ENCODE measurements at regions of chr1 and their contacts with region 1.

Region 1: DNA sequence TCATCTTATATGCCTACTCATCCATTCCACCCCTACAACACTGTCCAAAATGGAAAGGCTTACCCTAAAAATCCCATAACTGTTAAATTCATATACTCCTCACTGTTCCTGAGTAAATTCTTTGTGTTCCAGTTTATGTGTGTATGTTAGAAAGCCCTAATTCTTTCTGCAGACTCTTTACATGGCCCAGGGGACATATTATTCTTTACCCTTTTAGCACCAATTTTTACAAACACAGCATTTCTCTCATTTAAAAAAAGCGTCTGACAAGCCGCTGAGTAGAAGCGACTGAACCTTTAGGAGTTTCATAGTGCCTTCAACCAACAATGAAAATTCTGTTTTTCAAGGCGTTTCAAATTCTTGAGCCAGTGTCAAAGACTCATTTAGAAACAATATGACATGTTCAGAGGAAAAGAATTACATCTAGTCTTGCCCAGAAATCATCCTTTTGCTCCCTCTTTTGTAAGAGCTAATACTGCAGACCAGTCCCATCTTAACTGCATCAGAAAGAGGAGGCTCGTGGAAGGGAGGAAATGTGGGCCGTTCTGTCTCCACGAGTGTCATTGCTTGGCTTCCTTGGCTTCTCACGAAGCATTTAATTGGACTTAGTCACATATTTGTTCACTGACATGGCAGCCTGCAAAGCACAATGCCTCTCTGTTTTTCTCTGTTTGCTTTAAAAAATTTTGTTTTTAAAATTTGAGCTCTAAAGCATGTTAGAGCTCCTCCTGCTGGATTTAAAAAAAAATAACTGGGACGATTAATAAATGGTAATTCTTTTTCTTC is 21.3 kb upstream of the C1orf105 start:
- DNase-seq: peak; percentile 70
- H3K4me3 ChIP-seq: no peak overlapping the region
- H3K27ac ChIP-seq: no peak overlapping the region
- H3K27me3 ChIP-seq: no peaks in the 10 kb centered on the region
- CTCF ChIP-seq: peak; percentile 58

Region 2: DNA sequence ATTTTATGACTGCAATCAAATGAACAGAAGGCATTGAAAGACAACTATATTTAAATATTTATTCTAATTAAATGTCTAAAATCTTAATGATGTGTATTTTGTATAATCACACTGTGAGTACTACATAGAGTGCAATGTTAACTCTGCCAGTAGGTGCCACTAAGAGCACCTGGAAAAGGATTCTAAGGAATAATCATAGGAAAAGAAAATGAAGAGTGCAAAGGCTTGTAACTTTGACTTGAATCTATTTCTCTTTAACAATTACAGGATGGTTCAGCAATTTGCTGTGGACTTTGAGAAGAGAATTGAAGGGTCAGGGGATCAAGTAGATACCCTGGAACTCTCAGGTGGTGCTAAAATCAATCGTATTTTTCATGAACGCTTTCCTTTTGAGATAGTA is 357.4 kb before region 1 on chr1:
- CTCF ChIA-PET with region 1: interaction called, 11 read pairs
- POLR2A ChIA-PET with region 1: interaction called, 3 read pairs
- DNase-seq: no peak
- H3K4me3 ChIP-seq: no peak overlapping the region
- H3K27ac ChIP-seq: no peak overlapping the region
- H3K27me3 ChIP-seq: no peaks in the 10 kb centered on the region
- CTCF ChIP-seq: peak; percentile 56

Region 3: DNA sequence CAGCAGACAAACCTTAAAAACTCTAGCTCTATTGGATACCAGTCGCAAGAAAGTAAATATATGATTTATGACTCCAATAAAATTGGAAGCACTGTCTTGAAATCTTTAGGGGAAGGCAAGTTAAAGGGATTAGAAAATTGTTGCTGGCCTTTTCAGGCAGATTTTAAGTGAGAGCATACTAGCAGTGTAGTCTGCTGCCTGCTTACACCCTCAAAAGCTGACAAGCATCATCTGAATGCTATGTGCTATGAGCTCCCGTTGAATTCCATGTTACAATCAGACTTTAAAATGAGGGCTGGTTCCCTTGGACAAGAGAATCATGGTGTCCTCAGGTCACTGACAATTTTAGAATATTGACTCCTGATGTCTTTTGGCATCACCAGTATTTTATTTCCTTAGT is 249.8 kb before region 1 on chr1:
- CTCF ChIA-PET with region 1: interaction called, 16 read pairs
- POLR2A ChIA-PET with region 1: interaction called, 6 read pairs
- DNase-seq: no peak
- H3K4me3 ChIP-seq: no peak overlapping the region
- H3K27ac ChIP-seq: no peak overlapping the region
- H3K27me3 ChIP-seq: no peaks in the 10 kb centered on the region
- CTCF ChIP-seq: no peak

Region 4: DNA sequence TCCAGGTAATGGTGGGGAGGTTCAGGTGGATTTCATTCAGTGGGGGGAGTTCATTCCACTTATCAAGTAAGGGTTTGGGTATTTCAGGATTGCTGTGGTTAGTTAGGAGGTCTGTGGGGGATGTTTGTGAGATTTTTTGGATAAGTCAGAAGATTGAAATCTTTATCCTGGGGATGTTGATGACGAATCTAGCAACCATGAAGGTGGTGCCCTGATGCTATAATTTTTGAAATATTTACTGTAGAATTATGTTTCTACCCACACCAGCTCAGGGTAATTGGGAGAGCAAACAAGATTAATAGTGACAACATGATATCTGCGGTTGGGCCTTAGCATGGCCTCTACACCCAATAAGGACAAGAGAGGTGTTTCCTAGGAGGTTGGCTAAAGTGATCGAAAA is 162.1 kb after region 1 on chr1:
- CTCF ChIA-PET with region 1: no interaction called
- POLR2A ChIA-PET with region 1: no interaction called
- DNase-seq: no peak
- H3K4me3 ChIP-seq: no peak overlapping the region
- H3K27ac ChIP-seq: no peak overlapping the region
- H3K27me3 ChIP-seq: no peaks in the 10 kb centered on the region
- CTCF ChIP-seq: no peak

Region 5: GRCh38 chr1:172654535-172654934 is 255.4 kb after region 1 on chr1:
- CTCF ChIA-PET with region 1: no interaction called
- POLR2A ChIA-PET with region 1: no interaction called
- DNase-seq: peak; percentile 24
- H3K4me3 ChIP-seq: no peak overlapping the region
- H3K27ac ChIP-seq: no peak overlapping the region
- H3K27me3 ChIP-seq: no peaks in the 10 kb centered on the region
- CTCF ChIP-seq: no peak

Measured in AG04450 (cell line).